Sigmoid colon (tissue), 7 donors: ENCODE measurements at regions of chr7 and their contacts with region 1.

Region 1: GRCh38 chr7:100852048-100852872 is at the start of gene SLC12A9:
- DNase-seq: peak; percentile 95
- H3K4me3 ChIP-seq: peak within 1 kb of the TSS; percentile 46 to 81 (median 63)
- H3K27ac ChIP-seq: peak within 1 kb of the TSS; percentile 72 to 84 (median 78)
- H3K4me1 ChIP-seq: peaks cover 0 to 25% (median 12%) of the 10 kb centered on the region in 4 donors
- H3K27me3 ChIP-seq: no peaks in the 10 kb centered on the region
- CTCF ChIP-seq: peak; percentile 85 to 96 (median 94)
- EP300 ChIP-seq: no peak
- POLR2A ChIP-seq: peak in 1 of 2 donors; percentile 36
- total RNA-seq, gene SLC12A9: 10.4 to 17.9 (median 14.8) TPM

Region 2: GRCh38 chr7:100586266-100587025 is 265.8 kb before region 1 on chr7 and contains the start of gene FBXO24:
- intact Hi-C with region 1: loop called (anchors 10 kb)
- DNase-seq: peak; percentile 100
- H3K4me3 ChIP-seq: peak within 1 kb of the TSS; percentile 90 to 99 (median 94)
- H3K27ac ChIP-seq: peak within 1 kb of the TSS; percentile 91 to 96 (median 94)
- H3K4me1 ChIP-seq: peaks cover 0 to 44% (median 35%) of the 10 kb centered on the region in 4 donors
- H3K27me3 ChIP-seq: peaks cover 0 to 11% (median 0%) of the 10 kb centered on the region in 3 donors
- CTCF ChIP-seq: no peak
- EP300 ChIP-seq: no peak
- POLR2A ChIP-seq: peak; percentile 17 to 31
- total RNA-seq, gene FBXO24: 0.27 to 2.8 (median 0.71) TPM in 3 of 4 donors, not detected in the other

Region 3: GRCh38 chr7:100670074-100670473 is 182.2 kb before region 1 on chr7:
- intact Hi-C with region 1: no loop called
- DNase-seq: no peak
- H3K4me3 ChIP-seq: no peak overlapping the region
- H3K27ac ChIP-seq: no peak overlapping the region
- H3K4me1 ChIP-seq: peaks cover 0 to 6% (median 2%) of the 10 kb centered on the region in 4 donors
- H3K27me3 ChIP-seq: no peaks in the 10 kb centered on the region
- CTCF ChIP-seq: no peak
- EP300 ChIP-seq: no peak
- POLR2A ChIP-seq: no peak

Region 4: GRCh38 chr7:100705753-100706671 is 146.2 kb before region 1 on chr7 and contains the start of gene POP7:
- intact Hi-C with region 1: loop called (anchors 2 kb)
- DNase-seq: peak; percentile 100
- H3K4me3 ChIP-seq: peak within 1 kb of the TSS; percentile 64 to 72 (median 68)
- H3K27ac ChIP-seq: peak within 1 kb of the TSS; percentile 81 to 98 (median 96)
- H3K4me1 ChIP-seq: peaks cover 0 to 26% (median 22%) of the 10 kb centered on the region in 4 donors
- H3K27me3 ChIP-seq: no peaks in the 10 kb centered on the region
- CTCF ChIP-seq: no peak
- EP300 ChIP-seq: peak in 1 of 4 donors; percentile 72
- POLR2A ChIP-seq: peak; percentile 37 to 56
- total RNA-seq, gene POP7: 20.5 to 39.5 (median 31.7) TPM

Region 5: GRCh38 chr7:100803398-100804233 is 48.6 kb before region 1 on chr7:
- intact Hi-C with region 1: loop called (anchors 1 kb)
- DNase-seq: peak; percentile 92
- H3K4me3 ChIP-seq: peak overlapping the region in 1 of 4 donors; percentile 6
- H3K27ac ChIP-seq: peak overlapping the region; percentile 72 to 84 (median 79)
- H3K4me1 ChIP-seq: peaks cover 0 to 39% (median 36%) of the 10 kb centered on the region in 4 donors
- H3K27me3 ChIP-seq: no peaks in the 10 kb centered on the region
- CTCF ChIP-seq: no peak
- EP300 ChIP-seq: no peak
- POLR2A ChIP-seq: no peak

Region 6: DNA sequence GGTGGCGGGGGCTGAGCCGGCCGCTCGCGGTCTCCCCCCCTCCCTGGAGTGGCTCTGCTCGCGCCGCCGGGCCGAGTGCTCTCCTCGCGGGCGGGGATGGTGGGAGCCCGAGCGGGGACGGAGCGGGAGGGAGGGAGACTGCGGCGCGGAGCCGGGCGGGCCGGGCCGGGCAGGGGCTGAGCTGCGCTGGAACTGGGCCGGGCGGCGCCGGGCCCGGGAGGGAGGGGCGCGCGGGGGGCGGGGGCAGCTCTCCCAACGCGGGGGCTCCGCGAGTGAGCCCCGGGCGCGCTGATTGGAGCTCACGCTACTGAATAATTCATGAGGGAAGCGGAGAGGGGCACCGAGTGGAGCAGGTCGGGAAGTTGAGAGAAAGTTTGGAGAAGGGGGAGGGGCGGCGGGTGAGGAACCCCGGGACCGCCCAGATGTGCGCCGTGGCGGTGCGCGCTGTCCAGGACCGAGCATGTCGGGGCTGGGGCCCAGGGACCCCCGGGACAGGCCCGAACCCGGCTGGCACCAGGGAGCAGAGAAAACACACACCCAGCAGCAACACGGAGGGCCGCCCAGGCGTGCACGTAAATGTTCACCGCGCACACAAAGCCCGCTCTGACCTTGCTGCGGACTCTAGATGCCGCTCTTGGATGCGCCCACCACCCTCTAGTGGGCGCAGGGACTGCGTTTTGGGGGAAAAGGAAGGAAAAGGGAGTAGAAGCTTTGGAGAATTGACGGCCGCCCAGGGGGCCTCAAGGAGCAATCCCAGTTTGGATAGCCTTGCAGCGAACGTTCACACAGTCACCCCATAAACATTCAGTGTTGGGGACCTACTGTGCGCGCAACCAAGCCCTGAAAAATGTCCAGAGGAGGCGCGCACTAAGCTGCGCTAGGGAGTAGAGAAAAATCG is 24.7 kb before region 1 on chr7 and contains the start of gene EPHB4:
- intact Hi-C with region 1: loop called (anchors 1 kb)
- DNase-seq: peak; percentile 94
- H3K4me3 ChIP-seq: peak within 1 kb of the TSS; percentile 74 to 84 (median 80)
- H3K27ac ChIP-seq: peak within 1 kb of the TSS; percentile 85 to 92 (median 88)
- H3K4me1 ChIP-seq: peaks cover 0 to 34% (median 33%) of the 10 kb centered on the region in 4 donors
- H3K27me3 ChIP-seq: no peaks in the 10 kb centered on the region
- CTCF ChIP-seq: no peak
- EP300 ChIP-seq: no peak
- POLR2A ChIP-seq: peak in 1 of 2 donors; percentile 20
- total RNA-seq, gene EPHB4: 23.9 to 35.5 (median 29.3) TPM